PC-3 (cell line): ENCODE measurements at regions of chr10 and their contacts with region 1.

Region 1: GRCh38 chr10:52617346-52617745 is 155.2 kb downstream of the MBL2 start:
- DNase-seq: peak; percentile 89
- ATAC-seq: peak; percentile 85
- H3K4me3 ChIP-seq: no peak overlapping the region
- H3K27ac ChIP-seq: no peak overlapping the region
- H3K4me1 ChIP-seq: peaks cover 31% of the 10 kb centered on the region
- H3K27me3 ChIP-seq: no peaks in the 10 kb centered on the region
- CTCF ChIP-seq: no peak

Region 2: GRCh38 chr10:52632591-52632990 is 15.2 kb after region 1 on chr10:
- CTCF ChIA-PET with region 1: no interaction called
- POLR2A ChIA-PET with region 1: no interaction called
- intact Hi-C with region 1: loop called (anchors 1 kb)
- DNase-seq: peak; percentile 74
- ATAC-seq: peak; percentile 77
- H3K4me3 ChIP-seq: no peak overlapping the region
- H3K27ac ChIP-seq: peak overlapping the region; percentile 46
- H3K4me1 ChIP-seq: peaks cover 22% of the 10 kb centered on the region
- H3K27me3 ChIP-seq: no peaks in the 10 kb centered on the region
- CTCF ChIP-seq: no peak

Region 3: DNA sequence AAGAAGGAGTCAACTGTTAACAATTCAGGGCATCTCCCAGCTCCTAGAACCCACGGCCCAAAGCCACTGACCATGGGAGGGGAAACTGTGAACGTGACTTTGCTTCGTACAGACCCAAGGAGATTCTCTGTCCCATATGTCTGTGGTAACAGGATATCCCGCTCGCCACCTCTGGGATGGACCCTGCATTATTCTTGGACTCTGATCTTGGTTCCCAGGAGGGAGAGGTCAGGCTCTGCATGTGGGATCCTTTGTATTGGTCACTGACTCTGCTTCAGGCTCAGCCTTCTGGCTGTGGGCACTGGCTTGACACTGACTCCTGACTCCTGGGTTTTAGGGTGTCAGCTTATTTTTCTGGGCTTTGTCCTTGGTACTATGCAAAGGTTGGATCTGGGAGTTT is 168.8 kb after region 1 on chr10:
- CTCF ChIA-PET with region 1: no interaction called
- POLR2A ChIA-PET with region 1: no interaction called
- intact Hi-C with region 1: no loop called
- DNase-seq: no peak
- ATAC-seq: no peak
- H3K4me3 ChIP-seq: no peak overlapping the region
- H3K27ac ChIP-seq: no peak overlapping the region
- H3K4me1 ChIP-seq: no peaks in the 10 kb centered on the region
- H3K27me3 ChIP-seq: no peaks in the 10 kb centered on the region
- CTCF ChIP-seq: no peak